ENCODE measurements at regions of chr6 and their contacts with region 1.

Region 1: DNA sequence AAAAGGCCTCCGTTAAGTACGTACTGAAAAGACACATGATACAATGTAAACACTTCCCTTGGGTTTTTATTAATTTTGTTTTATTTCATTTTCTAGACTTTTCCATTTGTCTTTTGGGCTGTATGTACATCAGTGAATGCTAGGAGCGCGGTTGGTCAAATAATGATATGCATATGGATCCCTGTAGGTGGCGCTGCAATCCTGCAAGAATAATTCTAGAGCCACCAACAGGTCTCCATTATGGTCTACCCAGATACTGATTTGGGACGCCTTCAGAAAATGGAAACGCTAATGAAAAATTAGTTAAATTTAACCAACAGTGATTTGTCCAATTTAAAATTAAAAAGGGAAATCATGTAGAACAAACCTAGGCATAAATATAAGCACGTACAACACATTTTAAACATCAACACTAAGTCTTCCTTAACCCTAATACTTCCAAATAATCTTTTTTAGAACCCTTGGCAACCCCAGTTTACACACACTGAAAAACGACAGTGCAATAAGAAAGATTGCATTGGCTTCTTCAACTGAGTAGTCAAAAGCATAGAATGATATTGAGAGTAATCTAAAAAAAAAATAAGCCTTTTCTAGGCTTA is 433.5 kb downstream of the RFPL4B start:
- DNase-seq: peak; percentile 53
- CTCF ChIP-seq: peak; percentile 55

Region 2: DNA sequence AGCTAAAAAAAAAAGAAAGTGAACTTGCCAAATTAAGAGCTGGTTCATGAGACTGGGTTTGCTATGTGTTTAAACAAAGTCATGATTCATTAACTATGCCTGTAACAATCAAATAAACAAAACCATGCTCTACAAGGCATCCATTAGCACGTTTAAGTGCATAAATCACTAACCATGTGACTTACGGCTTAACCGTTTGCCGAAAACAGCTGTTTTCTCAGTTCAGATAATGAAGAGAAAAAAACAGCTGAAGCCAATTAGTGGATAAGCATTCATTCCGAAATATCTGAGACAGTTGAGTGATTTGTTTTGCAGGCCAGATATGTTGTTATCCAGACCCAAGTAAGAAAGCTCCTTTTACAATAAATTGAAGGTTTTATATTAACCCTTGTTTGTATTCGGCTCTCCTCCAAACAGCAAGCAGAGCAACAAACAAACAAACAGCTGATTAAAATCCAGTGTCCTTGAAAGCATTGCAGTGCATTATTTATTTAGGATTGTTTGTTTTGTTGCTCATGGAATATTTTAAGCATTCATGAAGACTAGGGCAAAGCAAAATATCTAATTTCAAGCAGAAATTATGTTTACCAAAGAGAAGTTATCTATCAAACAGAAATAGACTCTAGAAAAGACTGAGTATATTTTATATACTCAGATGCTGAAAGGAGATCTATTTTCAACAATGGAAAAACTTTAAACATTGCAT is 89.9 kb before region 1 on chr6:
- in situ Hi-C with region 1: no loop called
- DNase-seq: no peak
- CTCF ChIP-seq: no peak

Region 3: DNA sequence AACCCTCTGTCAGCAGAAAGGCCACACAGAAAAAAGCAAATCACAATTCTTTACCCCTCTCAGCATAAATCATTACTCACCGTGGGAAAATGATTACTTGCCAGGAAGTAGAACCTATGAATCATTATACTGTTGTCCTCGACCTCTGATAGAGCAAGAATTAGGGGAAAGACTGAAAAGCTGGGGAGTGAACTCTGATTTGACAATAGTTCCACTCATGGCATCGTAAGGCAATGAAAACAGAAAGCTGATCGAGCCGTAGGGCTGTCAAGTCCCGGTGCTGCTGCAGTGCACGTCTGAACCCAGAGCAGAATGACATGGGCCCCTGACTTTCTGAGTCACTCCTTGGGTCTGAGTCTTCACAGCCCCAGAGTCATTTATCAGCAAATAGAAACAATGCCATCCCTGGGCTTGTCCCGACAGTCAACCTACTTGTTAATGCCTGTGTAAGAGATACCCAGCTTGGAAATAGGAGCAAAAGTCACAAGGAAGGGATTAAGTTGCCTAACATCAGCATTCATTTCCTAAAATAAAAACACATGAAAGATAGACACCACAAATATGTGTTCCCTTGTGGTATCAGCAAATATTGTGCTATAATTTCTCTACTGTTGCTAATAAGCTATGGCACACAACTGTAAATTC is 851.7 kb after region 1 on chr6:
- in situ Hi-C with region 1: loop called (anchors 25 kb)
- DNase-seq: no peak
- CTCF ChIP-seq: no peak

Region 4: DNA sequence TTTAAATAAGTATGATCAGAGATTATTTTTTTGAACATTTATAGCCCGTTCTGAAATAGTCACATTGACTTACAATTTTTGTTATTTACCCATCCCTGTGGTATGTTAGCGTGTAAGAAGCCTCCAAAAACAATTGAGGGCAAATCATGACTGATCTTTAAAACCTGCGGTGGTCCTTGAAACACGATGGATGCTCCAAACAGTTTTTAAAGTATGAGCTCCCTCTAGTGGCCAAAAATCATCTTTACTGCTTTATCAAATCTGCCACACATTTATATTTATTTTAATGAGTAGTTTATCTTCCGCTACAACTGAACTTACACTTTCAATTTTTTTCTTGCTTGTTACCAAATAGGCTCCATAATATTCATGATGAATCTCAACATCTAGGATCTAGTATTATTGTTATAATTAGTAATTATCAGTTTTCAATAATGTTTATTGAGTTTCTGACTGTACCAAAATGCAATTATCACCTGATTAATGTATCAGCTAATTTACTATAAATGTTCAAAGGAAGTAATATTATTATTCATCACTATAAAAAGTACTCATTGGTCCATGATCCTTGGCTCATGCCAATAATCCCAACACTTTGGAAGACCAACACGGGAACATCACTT is 1128.7 kb after region 1 on chr6:
- in situ Hi-C with region 1: loop called (anchors 10 kb)
- DNase-seq: peak; percentile 72
- CTCF ChIP-seq: peak; percentile 44